Panc1 (cell line): ENCODE measurements at regions of chr6 and their contacts with region 1.

Region 1: GRCh38 chr6:168956884-168957730 is 296.5 kb downstream of the THBS2 start:
- DNase-seq: peak; percentile 62
- ATAC-seq: peak; percentile 98
- H3K4me3 ChIP-seq: no peak overlapping the region
- H3K27ac ChIP-seq: peak overlapping the region; percentile 8; the same call in 1 of the 2 replicates
- H3K4me1 ChIP-seq: peaks cover 4% of the 10 kb centered on the region
- H3K27me3 ChIP-seq: no peaks in the 10 kb centered on the region; the same call in 1 of the 2 replicates
- CTCF ChIP-seq: peak; percentile 96

Region 2: DNA sequence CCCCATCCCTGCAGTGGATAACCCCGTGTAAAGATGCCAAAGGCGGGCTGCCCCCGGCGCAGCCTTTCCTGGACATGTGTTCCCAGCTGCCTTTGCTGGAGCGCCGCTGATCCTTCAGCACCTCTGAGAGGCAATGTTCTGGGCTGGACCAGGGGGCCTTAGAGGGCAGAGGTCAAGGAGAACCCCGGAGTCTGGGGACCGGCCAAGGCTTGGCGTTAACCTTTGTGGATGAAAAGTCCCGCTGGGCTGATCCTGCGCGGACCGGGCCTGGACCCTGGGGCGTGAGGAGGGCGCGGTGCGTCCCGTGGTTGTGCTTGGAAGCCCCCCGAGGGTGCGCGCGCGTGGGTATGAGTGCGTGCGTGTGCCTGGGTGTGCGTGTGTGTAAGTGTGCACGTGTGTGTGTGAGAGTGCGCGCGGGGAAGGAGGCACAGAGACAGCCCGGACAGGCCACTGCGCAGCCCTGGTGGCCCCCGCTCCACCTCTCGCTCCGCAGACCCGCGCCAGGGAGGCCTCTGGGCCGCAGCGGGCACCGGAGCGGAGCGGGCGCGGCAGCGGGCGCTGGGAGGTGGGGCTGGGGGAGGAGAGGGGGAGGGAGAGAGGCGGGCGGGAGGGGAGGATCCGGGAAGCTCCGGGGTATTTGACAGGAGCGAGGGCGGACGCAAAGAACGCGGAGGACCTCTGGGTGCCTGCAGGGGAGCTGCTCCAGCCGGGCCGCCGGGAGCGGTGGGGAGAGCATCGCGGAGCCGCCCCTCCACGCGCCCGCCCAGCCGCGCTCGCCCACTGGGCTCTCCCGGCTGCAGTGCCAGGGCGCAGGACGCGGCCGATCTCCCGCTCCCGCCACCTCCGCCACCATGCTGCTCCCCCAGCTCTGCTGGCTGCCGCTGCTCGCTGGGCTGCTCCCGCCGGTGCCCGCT is 516.3 kb before region 1 on chr6 and contains the start of gene SMOC2:
- CTCF ChIA-PET with region 1: no interaction called
- POLR2A ChIA-PET with region 1: no interaction called
- in situ Hi-C with region 1: no loop called
- intact Hi-C with region 1: no loop called
- DNase-seq: no peak
- ATAC-seq: peak; percentile 73
- H3K4me3 ChIP-seq: no peak within 1 kb of the TSS
- H3K27ac ChIP-seq: no peak within 1 kb of the TSS
- H3K4me1 ChIP-seq: no peaks in the 10 kb centered on the region
- H3K27me3 ChIP-seq: peaks cover 63% of the 10 kb centered on the region
- CTCF ChIP-seq: no peak
- total RNA-seq, gene SMOC2: 0.13 TPM

Region 3: GRCh38 chr6:169212897-169213813 is 256.0 kb after region 1 on chr6:
- CTCF ChIA-PET with region 1: interaction called, 13 read pairs
- POLR2A ChIA-PET with region 1: no interaction called
- in situ Hi-C with region 1: no loop called
- intact Hi-C with region 1: no loop called
- DNase-seq: peak; percentile 62
- ATAC-seq: peak; percentile 100
- H3K4me3 ChIP-seq: peak overlapping the region; percentile 45 to 60
- H3K27ac ChIP-seq: peak overlapping the region; percentile 89
- H3K4me1 ChIP-seq: peaks cover 6% of the 10 kb centered on the region; the same call in 1 of the 2 replicates
- H3K27me3 ChIP-seq: no peaks in the 10 kb centered on the region
- CTCF ChIP-seq: peak; percentile 81

Region 4: DNA sequence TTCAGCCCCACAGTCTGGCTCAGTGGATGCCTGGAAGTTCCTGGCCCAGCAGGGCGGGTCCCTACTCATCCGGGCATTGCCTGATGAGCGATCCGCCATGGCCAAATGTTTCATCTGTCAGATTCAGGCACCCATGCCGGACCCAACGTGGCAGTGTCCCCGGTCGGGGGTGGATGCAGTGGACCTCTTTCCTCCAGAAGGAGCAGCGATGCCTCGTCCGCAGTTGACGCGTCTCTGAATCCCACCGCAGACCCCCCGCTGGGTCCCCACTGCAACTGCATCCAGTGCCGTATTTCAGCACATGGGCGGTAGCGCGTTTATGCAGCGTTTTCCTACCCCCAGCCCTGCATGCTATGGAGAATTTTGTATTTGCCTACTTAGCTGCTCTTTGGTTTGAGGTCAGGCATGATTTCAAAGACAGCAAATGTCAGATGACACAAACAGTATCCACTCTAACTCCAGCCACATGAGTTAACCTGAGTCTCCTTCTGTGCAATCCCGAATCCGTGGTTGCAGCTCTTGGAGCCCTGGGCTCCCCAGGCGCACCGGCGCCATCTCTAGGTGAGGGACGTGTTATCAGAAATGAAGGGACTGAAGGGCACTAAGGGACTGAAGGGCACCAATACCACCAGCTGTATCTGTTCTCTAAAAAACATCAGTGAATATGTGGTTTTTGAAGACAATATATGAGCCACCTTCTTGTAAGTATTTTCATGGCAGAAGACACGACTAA is 369.1 kb after region 1 on chr6:
- CTCF ChIA-PET with region 1: interaction called, 5 read pairs
- POLR2A ChIA-PET with region 1: no interaction called
- in situ Hi-C with region 1: no loop called
- intact Hi-C with region 1: loop called (anchors 10 kb)
- DNase-seq: peak; percentile 7
- ATAC-seq: peak; percentile 74
- H3K4me3 ChIP-seq: no peak overlapping the region
- H3K27ac ChIP-seq: no peak overlapping the region
- H3K4me1 ChIP-seq: no peaks in the 10 kb centered on the region
- H3K27me3 ChIP-seq: peaks cover 3% of the 10 kb centered on the region; the same call in 1 of the 2 replicates
- CTCF ChIP-seq: peak; percentile 71

Region 5: DNA sequence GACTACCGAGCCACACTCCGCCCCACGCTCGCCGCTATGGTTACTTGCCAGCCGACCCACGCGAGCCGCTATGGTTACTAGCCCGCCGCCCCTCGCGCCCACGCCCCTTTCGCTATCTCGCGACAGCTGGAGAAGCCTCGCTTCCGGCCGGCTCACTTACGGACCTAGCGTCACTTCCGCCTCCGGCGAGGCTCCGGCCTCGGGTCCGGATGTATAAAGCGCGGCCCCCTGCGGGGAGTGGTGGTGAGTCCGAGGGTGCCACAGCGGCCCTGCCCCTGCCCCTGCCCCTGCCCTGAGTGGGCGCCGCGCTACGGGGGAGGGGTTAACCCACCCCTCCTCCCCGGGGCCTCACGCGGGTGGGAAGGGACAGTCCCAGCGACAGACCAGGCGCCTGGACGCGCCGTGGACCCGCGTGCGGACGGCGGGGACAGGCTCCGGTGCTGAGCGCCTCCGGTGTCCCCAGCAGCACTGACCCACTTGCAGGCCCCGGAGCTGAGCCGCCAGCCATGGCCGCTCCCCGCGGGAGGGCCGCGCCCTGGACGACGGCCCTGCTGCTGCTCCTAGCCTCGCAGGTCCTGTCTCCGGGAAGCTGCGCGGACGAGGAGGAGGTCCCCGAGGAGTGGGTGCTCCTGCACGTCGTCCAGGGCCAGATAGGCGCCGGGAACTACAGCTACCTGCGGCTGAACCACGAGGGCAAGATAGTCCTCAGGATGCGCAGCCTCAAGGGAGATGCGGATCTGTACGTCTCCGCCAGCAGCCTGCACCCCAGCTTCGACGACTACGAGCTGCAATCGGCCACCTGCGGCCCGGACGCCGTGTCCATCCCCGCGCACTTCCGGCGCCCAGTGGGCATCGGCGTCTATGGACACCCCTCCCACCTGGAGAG is 745.1 kb after region 1 on chr6 and contains the starts of genes C6orf120 and WDR27:
- CTCF ChIA-PET with region 1: no interaction called
- POLR2A ChIA-PET with region 1: no interaction called
- in situ Hi-C with region 1: no loop called
- intact Hi-C with region 1: loop called (anchors 5 kb)
- DNase-seq: no peak
- ATAC-seq: peak; percentile 97
- H3K4me3 ChIP-seq: peak within 1 kb of the TSS; percentile 85 to 100
- H3K27ac ChIP-seq: peak within 1 kb of the TSS; percentile 97
- H3K4me1 ChIP-seq: peaks cover 32% of the 10 kb centered on the region
- H3K27me3 ChIP-seq: no peaks in the 10 kb centered on the region
- CTCF ChIP-seq: no peak
- total RNA-seq, gene C6orf120: 31.5 TPM
- total RNA-seq, gene WDR27: 56.3 TPM